ENCODE measurements at regions of chr14 and their contacts with region 1.

Region 1: DNA sequence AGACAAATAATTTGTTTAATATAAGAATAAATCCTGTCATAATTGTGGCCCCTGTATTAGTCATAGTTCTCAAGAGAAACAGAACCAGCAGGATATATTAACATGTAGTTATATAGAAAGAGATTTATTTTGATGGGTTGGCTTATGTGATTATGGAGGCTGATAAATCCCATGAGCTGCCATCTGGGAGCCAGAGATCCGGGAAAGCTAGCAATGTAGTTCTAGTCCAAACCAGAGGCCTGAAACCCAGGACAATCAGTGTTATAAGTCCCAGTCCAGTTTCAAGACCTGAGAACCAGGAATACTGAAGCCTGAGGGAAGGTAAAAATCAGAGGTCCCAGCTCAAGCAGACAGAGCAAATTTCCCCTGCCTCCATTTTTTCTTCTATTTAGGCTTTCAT is 435.8 kb downstream of the RPL10L start:
- DNase-seq: no peak
- H3K4me3 ChIP-seq: no peak overlapping the region
- H3K27ac ChIP-seq: no peak overlapping the region
- H3K4me1 ChIP-seq: no peaks in the 10 kb centered on the region
- H3K27me3 ChIP-seq: no peaks in the 10 kb centered on the region
- CTCF ChIP-seq: no peak
- EP300 ChIP-seq: no peak
- POLR2A ChIP-seq: no peak

Region 2: DNA sequence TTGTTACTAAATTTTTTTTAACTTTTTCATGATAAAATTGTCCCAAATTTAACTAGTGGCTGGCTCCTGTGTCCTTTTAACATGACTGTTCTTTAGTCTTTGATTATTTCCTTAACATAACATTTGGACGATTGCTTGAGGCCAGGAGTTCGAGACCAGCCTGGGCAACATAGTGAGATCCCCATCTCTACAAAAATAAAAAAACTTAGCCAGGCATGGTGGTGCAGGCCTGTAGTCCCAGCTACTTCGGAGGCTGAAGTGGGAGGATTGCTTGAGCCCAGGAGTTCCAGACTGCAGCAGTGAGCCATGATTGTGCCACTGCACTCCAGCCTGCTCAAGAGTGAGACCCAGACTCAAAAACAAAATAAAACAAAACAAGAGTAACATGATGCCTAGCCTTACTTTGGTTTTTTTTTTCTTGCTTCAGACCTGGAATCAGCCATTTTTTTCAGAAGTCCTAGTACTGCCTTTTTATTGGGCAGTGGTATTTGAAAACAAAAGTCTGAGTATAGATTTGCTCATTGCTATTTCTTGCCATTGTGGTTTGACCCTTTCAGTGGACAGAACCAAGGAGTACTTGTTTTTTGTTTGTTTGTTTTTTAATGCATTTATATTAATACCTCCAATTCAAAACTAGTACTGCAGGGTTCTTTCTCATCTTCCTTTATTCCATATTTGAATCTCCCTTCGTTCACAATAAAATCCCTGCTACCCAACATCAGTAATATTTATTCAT is 1249.0 kb before region 1 on chr14:
- intact Hi-C with region 1: no loop called
- DNase-seq: no peak
- H3K4me3 ChIP-seq: peak overlapping the region; percentile 15
- H3K27ac ChIP-seq: no peak overlapping the region
- H3K4me1 ChIP-seq: peaks cover 10% of the 10 kb centered on the region
- H3K27me3 ChIP-seq: no peaks in the 10 kb centered on the region
- CTCF ChIP-seq: no peak
- EP300 ChIP-seq: no peak
- POLR2A ChIP-seq: no peak

Region 3: DNA sequence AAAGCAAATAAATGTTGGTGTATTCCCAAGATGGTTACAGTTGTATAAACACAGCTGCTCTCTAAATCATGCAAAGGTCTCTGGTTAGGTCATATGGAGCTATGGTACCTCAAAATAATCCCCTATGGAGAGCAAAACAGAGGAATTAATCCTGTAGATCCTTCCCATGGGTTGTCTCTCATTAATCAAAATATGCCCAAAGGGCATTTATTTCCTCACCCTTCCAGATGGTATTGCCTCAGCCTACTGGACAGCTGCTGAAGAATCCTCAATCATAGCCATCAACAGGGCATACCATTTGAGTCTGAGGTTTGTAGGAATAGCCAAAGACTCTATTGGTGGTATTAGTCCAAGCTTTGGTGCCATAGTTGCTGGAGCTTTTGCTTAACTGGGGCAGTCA is 74.9 kb after region 1 on chr14:
- intact Hi-C with region 1: loop called in 1 of 4 experiments (anchors 10 kb)
- DNase-seq: no peak
- H3K4me3 ChIP-seq: no peak overlapping the region
- H3K27ac ChIP-seq: no peak overlapping the region
- H3K4me1 ChIP-seq: no peaks in the 10 kb centered on the region
- H3K27me3 ChIP-seq: no peaks in the 10 kb centered on the region
- CTCF ChIP-seq: no peak
- EP300 ChIP-seq: no peak
- POLR2A ChIP-seq: no peak

Measured in ovary (tissue), 10 donors.